MCF 10A (cell line): ENCODE measurements at regions of chr11 and their contacts with region 1.

Region 1: GRCh38 chr11:130979386-130979972 is 63.2 kb upstream of the SNX19 start:
- DNase-seq: peak; percentile 53
- H3K4me3 Mint-ChIP-seq: no peak overlapping the region
- H3K27ac Mint-ChIP-seq: no peak overlapping the region
- H3K4me1 Mint-ChIP-seq: no peaks in the 10 kb centered on the region
- H3K27me3 Mint-ChIP-seq: peaks cover 30% of the 10 kb centered on the region
- CTCF ChIP-seq: peak; percentile 64

Region 2: GRCh38 chr11:130904380-130904779 is 75.1 kb before region 1 on chr11:
- CTCF ChIA-PET with region 1: interaction called, 11 read pairs
- POLR2A ChIA-PET with region 1: no interaction called
- intact Hi-C with region 1: no loop called
- DNase-seq: peak; percentile 25
- H3K4me3 Mint-ChIP-seq: no peak overlapping the region
- H3K27ac Mint-ChIP-seq: no peak overlapping the region
- H3K4me1 Mint-ChIP-seq: peaks cover 13% of the 10 kb centered on the region
- H3K27me3 Mint-ChIP-seq: no peaks in the 10 kb centered on the region
- CTCF ChIP-seq: no peak

Region 3: DNA sequence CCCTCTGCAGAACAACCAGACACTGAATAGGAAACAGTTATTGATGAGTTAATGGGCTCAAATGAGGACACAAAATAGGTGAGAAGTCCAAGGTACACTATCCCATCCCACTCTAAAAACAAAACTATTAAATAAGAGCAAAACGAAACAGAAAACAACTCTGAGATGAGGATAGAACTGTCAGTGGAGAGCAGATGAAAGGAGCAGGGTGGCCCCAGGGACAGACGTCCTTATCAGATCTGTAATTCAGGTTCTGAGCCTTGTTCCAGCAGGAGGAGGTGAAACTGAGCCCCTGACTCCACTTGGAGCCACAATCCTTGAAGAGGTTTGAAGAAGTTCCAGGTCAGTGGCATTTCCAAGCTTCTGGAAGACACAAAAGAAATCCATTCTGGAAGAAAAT is 54.7 kb before region 1 on chr11:
- CTCF ChIA-PET with region 1: interaction called, 14 read pairs
- POLR2A ChIA-PET with region 1: no interaction called
- intact Hi-C with region 1: loop called (anchors 1 kb)
- DNase-seq: no peak
- H3K4me3 Mint-ChIP-seq: no peak overlapping the region
- H3K27ac Mint-ChIP-seq: no peak overlapping the region
- H3K4me1 Mint-ChIP-seq: no peaks in the 10 kb centered on the region
- H3K27me3 Mint-ChIP-seq: peaks cover 15% of the 10 kb centered on the region
- CTCF ChIP-seq: no peak

Region 4: DNA sequence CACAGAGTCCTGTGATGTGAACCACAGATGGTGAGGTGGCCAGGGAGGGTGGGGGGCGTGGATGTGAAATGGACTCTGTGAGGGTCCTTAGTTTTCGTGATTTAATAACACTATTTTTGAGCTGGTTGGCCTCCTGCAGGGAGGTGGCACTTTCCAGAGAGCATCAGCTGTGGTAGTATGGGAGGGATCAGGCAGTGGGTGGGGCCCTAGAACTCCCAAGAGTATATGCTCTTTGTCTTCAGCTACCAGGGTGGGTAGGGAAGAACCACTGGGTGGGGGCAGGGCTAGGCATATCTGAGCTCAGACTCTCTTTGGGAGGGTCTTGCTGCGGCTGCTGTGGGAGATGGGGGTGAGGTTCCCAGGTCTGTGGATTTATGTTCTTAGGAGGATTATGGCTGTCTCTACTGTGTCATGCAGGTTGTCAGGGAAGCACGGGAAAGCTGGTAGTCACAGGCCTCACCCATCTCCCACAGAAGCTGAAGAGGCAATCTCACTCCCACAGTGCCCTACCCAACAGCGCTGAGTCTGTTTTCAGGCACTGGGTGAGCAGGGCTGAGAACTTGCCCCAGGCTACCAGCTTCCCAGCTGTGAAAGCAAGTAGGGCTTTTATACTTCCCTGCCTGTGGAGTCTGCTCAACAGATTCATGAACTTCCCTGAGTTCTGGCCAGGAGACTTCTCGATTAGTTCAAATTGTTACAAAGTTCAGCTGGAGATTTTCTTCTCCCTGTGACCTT is 15.3 kb before region 1 on chr11:
- CTCF ChIA-PET with region 1: interaction called, 11 read pairs
- POLR2A ChIA-PET with region 1: interaction called, 4 read pairs
- intact Hi-C with region 1: no loop called
- DNase-seq: peak; percentile 6
- H3K4me3 Mint-ChIP-seq: no peak overlapping the region
- H3K27ac Mint-ChIP-seq: no peak overlapping the region
- H3K4me1 Mint-ChIP-seq: no peaks in the 10 kb centered on the region
- H3K27me3 Mint-ChIP-seq: no peaks in the 10 kb centered on the region
- CTCF ChIP-seq: no peak

Region 5: GRCh38 chr11:131674051-131674755 is 694.7 kb after region 1 on chr11:
- CTCF ChIA-PET with region 1: interaction called, 13 read pairs
- POLR2A ChIA-PET with region 1: no interaction called
- intact Hi-C with region 1: no loop called
- DNase-seq: peak; percentile 20
- H3K4me3 Mint-ChIP-seq: no peak overlapping the region
- H3K27ac Mint-ChIP-seq: no peak overlapping the region
- H3K4me1 Mint-ChIP-seq: no peaks in the 10 kb centered on the region
- H3K27me3 Mint-ChIP-seq: no peaks in the 10 kb centered on the region
- CTCF ChIP-seq: peak; percentile 70